ENCODE measurements at regions of chr13 and their contacts with region 1.

Region 1: GRCh38 chr13:40125336-40125735 is 469.9 kb downstream of the COG6 start:
- DNase-seq: no peak
- ATAC-seq: no peak
- H3K4me3 Mint-ChIP-seq: no peak overlapping the region
- H3K27ac Mint-ChIP-seq: peak overlapping the region in 1 of 10 donors; percentile 28
- H3K4me1 Mint-ChIP-seq: peaks cover 20 to 39% (median 32%) of the 10 kb centered on the region in 4 donors
- H3K27me3 Mint-ChIP-seq: no peaks in the 10 kb centered on the region

Region 2: GRCh38 chr13:40136896-40137295 is 11.6 kb after region 1 on chr13:
- POLR2A ChIA-PET with region 1: interaction called, 12 read pairs
- DNase-seq: no peak
- ATAC-seq: no peak
- H3K4me3 Mint-ChIP-seq: no peak overlapping the region
- H3K27ac Mint-ChIP-seq: peak overlapping the region in 2 of 10 donors; percentile 23 to 38
- H3K4me1 Mint-ChIP-seq: peaks cover 2 to 16% (median 9%) of the 10 kb centered on the region in 4 donors
- H3K27me3 Mint-ChIP-seq: no peaks in the 10 kb centered on the region

Region 3: DNA sequence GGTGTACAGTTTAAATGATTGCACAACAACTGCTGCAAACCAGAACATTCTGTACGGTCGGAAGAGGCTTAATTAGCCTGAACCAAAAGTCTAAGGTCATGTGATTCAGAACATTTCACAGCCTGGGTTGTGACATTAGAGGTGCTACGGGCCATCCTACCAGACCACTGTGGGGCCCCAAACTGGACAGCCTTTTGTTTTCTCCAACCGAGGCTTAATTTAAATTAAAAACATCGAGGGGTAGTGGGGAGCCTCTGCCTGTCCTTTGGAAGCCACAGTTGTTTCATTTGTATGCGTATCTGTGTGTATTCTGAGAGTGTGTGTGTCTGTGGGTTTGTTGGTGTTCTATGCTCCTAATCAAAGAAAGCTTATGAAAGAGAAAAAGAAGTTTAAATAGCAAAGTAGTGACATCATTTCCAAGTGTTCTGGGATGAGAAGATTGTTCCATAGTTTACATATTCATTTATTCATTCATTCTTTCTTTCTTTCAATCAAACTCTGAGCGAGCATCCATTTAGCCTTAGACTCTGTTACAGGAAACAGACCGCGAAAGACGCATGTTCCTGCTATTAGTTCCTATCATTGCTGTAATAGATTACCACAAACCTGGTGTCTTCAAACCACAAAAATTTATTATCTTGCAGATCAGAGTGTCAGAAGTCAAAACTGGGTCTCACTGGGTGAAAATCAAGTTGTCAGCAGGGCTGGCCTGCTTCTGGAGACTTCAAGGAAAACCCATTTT is 96.3 kb after region 1 on chr13:
- POLR2A ChIA-PET with region 1: no interaction called
- DNase-seq: peak in 7 of 10 donors; percentile 8 to 77 (median 59)
- ATAC-seq: peak; percentile 77 to 89
- H3K4me3 Mint-ChIP-seq: peak overlapping the region; percentile 16 to 80 (median 46)
- H3K27ac Mint-ChIP-seq: peak overlapping the region; percentile 64 to 95 (median 88)
- H3K4me1 Mint-ChIP-seq: peaks cover 32 to 58% (median 47%) of the 10 kb centered on the region in 4 donors
- H3K27me3 Mint-ChIP-seq: no peaks in the 10 kb centered on the region